HepG2 (cell line): ENCODE measurements at regions of chr19 and their contacts with region 1.

Region 1: GRCh38 chr19:17448131-17448967 is at the start of gene TMEM221:
- DNase-seq: no peak
- ATAC-seq: peak; percentile 90
- H3K4me3 ChIP-seq: peak within 1 kb of the TSS; percentile 66 to 69 (median 67); a peak in 4 of 6 replicates
- H3K27ac ChIP-seq: no peak within 1 kb of the TSS
- H3K4me1 ChIP-seq: 0 out of 2 replicates have a peak, but pooled peaks cover 7% of the 10 kb centered on the region
- H3K27me3 ChIP-seq: no peaks in the 10 kb centered on the region; a peak in 1 of 5 replicates
- CTCF ChIP-seq: peak; percentile 57
- EP300 ChIP-seq: 0 out of 4 replicates have a peak, but pooled peaks of 1 of the 2 experiments have one; percentile 4
- POLR2A ChIP-seq: no peak
- RAD21 ChIP-seq: no peak
- total RNA-seq, gene TMEM221: 0.55 and 0.77 TPM in 2 replicates

Region 2: DNA sequence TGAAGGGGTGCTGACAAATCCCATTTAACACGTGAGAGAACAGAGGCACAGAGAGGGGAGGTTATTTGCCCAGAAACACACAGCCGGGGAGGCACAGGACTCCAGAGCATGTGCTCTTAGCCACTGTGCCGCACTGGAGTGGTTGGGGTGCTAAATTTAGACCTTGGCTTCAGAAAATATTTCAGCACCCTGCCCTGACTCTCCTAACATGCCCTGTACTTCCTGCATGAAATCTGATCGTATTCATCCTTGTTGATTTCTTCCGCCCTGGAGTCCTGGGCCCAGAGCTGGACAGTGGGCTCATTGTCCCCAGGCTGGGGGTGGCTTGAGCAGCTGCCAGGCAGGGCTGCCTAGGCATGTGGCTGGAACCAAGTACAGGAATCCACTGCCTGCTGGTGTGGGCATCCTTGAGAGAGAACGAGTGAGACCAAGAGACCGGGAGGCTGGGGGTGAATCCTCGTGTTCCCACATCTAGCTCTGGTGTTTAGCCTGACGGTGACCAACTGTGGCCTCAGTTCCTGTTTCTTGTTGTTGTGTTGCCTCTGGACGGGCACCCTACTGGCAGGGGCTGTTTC is 27.3 kb after region 1 on chr19:
- CTCF ChIA-PET with region 1: no interaction called
- POLR2A ChIA-PET with region 1: no interaction called
- in situ Hi-C with region 1: no loop called
- intact Hi-C with region 1: no loop called
- DNase-seq: peak; percentile 93
- ATAC-seq: peak; percentile 95
- H3K4me3 ChIP-seq: peak overlapping the region in 1 of 3 experiments; percentile 21; a peak in 2 of 6 replicates
- H3K27ac ChIP-seq: peak overlapping the region; percentile 71
- H3K4me1 ChIP-seq: peaks cover 55% of the 10 kb centered on the region
- H3K27me3 ChIP-seq: no peaks in the 10 kb centered on the region
- CTCF ChIP-seq: no peak
- EP300 ChIP-seq: peak in 1 of 2 experiments; percentile 52; a peak in 2 of 4 replicates
- POLR2A ChIP-seq: no peak; a peak in 1 of 4 replicates
- RAD21 ChIP-seq: no peak

Region 3: DNA sequence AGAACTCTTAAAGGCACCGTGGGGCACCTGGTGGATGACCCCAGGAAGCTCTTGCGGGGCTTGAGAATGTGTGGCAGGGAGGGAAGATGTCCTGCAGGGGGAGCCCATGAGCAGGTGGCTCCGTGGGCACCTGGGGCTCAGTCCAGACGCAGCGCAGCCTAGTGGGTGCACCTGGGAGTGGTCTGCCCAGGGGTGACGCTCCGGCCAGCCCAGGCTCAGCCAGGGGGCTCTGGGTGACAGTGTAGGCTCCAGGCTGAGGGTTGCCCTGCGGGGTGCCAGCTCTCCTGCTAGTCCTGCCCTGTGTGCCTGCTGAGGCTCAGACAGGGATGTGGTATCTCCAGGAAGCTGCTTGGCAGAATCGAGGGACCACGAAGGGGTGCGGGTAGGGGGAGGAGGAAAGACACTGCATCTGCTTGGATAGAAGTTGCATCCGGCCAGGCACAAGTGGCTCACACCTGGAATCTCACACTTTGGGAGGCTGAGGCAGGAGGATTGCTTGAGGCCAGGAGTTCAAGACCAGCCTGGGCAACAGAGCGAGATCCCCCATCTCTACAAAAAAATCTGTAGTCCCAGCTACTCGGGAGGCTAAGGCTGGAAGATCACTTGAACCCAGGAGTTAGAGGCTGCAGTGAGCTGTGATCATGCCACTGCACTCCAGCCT is 48.1 kb after region 1 on chr19:
- CTCF ChIA-PET with region 1: interaction called, 10 read pairs
- POLR2A ChIA-PET with region 1: no interaction called
- in situ Hi-C with region 1: no loop called
- intact Hi-C with region 1: no loop called
- DNase-seq: peak; percentile 81
- ATAC-seq: peak; percentile 85
- H3K4me3 ChIP-seq: no peak overlapping the region
- H3K27ac ChIP-seq: no peak overlapping the region
- H3K4me1 ChIP-seq: peaks cover 40% of the 10 kb centered on the region
- H3K27me3 ChIP-seq: no peaks in the 10 kb centered on the region
- CTCF ChIP-seq: peak; percentile 93
- EP300 ChIP-seq: no peak
- POLR2A ChIP-seq: no peak
- RAD21 ChIP-seq: peak; percentile 89

Region 4: DNA sequence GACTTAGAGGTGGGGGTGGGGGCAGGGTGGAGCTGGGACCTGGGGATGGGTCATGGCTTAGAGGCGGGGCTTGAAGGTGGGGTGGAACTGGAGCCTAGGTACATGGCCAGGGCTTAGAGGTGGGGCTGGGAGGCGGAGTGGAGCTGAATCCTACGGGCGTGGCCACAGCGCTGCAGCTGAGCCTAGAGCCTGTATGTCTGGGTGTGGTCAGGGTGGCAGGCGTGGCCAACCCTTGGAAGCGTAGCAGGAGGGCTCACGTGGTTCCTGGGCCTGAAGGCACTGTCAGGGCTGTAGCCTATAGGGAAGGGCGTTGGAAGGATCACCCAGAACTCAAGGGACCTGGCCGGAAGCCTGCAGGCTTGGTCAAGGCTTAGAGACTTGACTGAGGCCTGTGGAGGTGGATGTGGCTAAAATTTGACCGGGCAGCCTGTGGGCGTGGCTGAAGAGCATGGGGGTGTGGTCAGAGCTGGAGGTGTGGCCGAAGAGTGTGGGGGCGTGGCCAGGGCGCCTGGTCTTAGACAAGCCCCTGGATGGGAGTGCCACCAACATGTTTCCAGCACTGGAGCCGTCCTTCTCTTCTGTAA is 131.4 kb after region 1 on chr19:
- CTCF ChIA-PET with region 1: interaction called, 5 read pairs
- POLR2A ChIA-PET with region 1: no interaction called
- in situ Hi-C with region 1: loop called (anchors 10 kb)
- intact Hi-C with region 1: no loop called
- DNase-seq: no peak
- ATAC-seq: peak; percentile 69
- H3K4me3 ChIP-seq: no peak overlapping the region
- H3K27ac ChIP-seq: no peak overlapping the region
- H3K4me1 ChIP-seq: no peaks in the 10 kb centered on the region
- H3K27me3 ChIP-seq: no peaks in the 10 kb centered on the region
- CTCF ChIP-seq: no peak
- EP300 ChIP-seq: no peak
- POLR2A ChIP-seq: no peak
- RAD21 ChIP-seq: no peak